Activated naive CD4-positive, alpha-beta T cell treated with anti-CD3 and anti-CD28 coated beads for 36 hours (primary cell): ENCODE measurements at regions of chr22 and their contacts with region 1.

Region 1: GRCh38 chr22:37077884-37078485 is 26.4 kb downstream of the KCTD17 start:
- DNase-seq: peak; percentile 91
- H3K4me3 Mint-ChIP-seq: peak overlapping the region; percentile 12
- H3K27ac Mint-ChIP-seq: peak overlapping the region; percentile 97
- H3K4me1 Mint-ChIP-seq: peaks cover 53% of the 10 kb centered on the region
- H3K27me3 Mint-ChIP-seq: peaks cover 4% of the 10 kb centered on the region

Region 2: DNA sequence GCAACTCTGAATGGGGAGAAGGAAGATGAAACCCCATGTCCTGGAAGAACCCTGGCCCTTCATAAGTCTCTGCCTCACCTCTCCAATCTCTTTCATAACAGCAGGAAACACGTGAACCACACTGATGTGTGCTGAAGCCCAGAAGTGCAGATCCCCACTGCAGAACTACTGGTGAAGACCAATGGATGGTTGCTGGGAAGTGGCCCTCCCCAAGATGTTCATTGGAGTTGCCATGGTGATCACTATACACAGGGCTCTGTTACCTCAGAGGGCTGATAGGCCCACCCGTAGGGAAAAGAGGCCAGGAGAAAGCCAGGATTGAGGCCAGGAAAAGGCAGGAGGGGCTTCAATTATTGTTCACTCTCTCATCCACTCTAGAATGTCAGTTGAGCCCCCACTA is 70.3 kb before region 1 on chr22:
- CTCF ChIA-PET with region 1: no interaction called
- intact Hi-C with region 1: no loop called
- DNase-seq: no peak
- H3K4me3 Mint-ChIP-seq: no peak overlapping the region
- H3K27ac Mint-ChIP-seq: peak overlapping the region; percentile 10
- H3K4me1 Mint-ChIP-seq: no peaks in the 10 kb centered on the region
- H3K27me3 Mint-ChIP-seq: peaks cover 3% of the 10 kb centered on the region

Region 3: DNA sequence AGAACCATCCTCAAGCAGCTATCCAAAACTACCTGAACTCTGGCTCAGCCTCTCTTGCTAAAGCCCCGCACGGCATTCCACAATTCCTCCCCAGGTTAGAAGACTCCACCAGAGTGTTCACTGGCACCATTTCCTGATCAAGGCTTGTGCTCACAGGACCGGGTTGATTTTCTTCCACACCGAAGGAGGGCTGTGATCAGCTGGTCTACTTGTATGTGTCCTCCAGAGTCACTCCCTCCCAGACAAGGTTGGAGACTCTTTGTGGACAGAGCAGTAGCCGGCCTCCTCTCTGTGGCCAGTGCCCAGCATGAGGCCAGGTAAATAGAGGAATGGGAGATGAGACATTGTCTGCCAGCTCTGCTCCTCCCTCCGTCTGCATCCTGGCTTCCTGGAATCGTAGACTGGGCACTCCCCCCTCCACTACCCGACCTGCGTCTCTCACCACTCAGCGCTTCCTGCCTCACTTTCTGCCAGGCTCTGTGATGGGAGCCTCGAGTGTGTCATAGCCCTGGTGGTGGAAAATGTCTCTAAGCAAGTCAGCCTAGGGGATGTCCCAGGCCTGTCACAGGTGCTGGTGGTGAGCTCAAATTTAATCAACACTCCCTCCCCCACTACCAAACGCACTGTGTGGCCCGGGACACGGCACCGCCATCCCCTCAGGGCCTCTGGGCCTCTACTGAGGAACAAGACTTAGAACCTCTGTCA is 44.1 kb after region 1 on chr22:
- CTCF ChIA-PET with region 1: interaction called, 6 read pairs
- intact Hi-C with region 1: loop called (anchors 1 kb)
- DNase-seq: peak; percentile 98
- H3K4me3 Mint-ChIP-seq: peak overlapping the region; percentile 85
- H3K27ac Mint-ChIP-seq: peak overlapping the region; percentile 99
- H3K4me1 Mint-ChIP-seq: peaks cover 73% of the 10 kb centered on the region
- H3K27me3 Mint-ChIP-seq: no peaks in the 10 kb centered on the region

Region 4: GRCh38 chr22:37148742-37149665 is 71.0 kb after region 1 on chr22:
- CTCF ChIA-PET with region 1: interaction called, 18 read pairs
- intact Hi-C with region 1: loop called (anchors 1 kb)
- DNase-seq: no peak
- H3K4me3 Mint-ChIP-seq: peak overlapping the region; percentile 87
- H3K27ac Mint-ChIP-seq: peak overlapping the region; percentile 96
- H3K4me1 Mint-ChIP-seq: peaks cover 53% of the 10 kb centered on the region
- H3K27me3 Mint-ChIP-seq: no peaks in the 10 kb centered on the region

Region 5: GRCh38 chr22:37193629-37194191 is 115.7 kb after region 1 on chr22:
- CTCF ChIA-PET with region 1: interaction called, 38 read pairs
- intact Hi-C with region 1: loop called (anchors 1 kb)
- DNase-seq: peak; percentile 61
- H3K4me3 Mint-ChIP-seq: peak overlapping the region; percentile 14
- H3K27ac Mint-ChIP-seq: peak overlapping the region; percentile 65
- H3K4me1 Mint-ChIP-seq: peaks cover 45% of the 10 kb centered on the region
- H3K27me3 Mint-ChIP-seq: no peaks in the 10 kb centered on the region

Region 6: GRCh38 chr22:37244114-37244921 is 166.3 kb after region 1 on chr22 and contains the start of gene RAC2:
- CTCF ChIA-PET with region 1: no interaction called
- intact Hi-C with region 1: loop called (anchors 5 kb)
- DNase-seq: peak; percentile 94
- H3K4me3 Mint-ChIP-seq: peak within 1 kb of the TSS; percentile 99
- H3K27ac Mint-ChIP-seq: peak within 1 kb of the TSS; percentile 99
- H3K4me1 Mint-ChIP-seq: peaks cover 38% of the 10 kb centered on the region
- H3K27me3 Mint-ChIP-seq: no peaks in the 10 kb centered on the region
- total RNA-seq, gene RAC2: 728 to 759 TPM

Region 7: DNA sequence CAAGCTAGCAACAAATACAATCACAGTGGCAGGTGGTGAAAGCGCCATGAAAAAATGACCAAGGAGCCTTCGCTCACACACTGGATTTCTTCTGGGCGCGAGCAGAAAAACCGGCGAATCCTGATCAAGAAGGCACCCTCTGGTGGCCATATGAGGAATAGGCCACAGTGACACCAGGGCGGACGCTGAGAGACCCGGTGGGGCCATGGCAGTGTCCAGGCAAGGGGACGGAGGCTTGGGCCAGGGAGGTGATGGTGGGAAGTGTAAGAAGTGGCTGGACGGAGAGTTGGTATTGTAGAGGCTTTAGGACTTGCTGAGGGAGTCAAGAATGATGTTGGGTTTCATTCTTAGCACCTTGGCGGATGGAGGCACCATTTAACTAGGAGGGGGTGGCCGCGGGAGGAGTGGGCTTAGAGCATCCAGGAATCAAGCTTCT is 182.9 kb after region 1 on chr22:
- CTCF ChIA-PET with region 1: interaction called, 8 read pairs
- intact Hi-C with region 1: loop called (anchors 2 kb)
- DNase-seq: peak; percentile 75
- H3K4me3 Mint-ChIP-seq: no peak overlapping the region
- H3K27ac Mint-ChIP-seq: no peak overlapping the region
- H3K4me1 Mint-ChIP-seq: peaks cover 34% of the 10 kb centered on the region
- H3K27me3 Mint-ChIP-seq: no peaks in the 10 kb centered on the region

Region 8: DNA sequence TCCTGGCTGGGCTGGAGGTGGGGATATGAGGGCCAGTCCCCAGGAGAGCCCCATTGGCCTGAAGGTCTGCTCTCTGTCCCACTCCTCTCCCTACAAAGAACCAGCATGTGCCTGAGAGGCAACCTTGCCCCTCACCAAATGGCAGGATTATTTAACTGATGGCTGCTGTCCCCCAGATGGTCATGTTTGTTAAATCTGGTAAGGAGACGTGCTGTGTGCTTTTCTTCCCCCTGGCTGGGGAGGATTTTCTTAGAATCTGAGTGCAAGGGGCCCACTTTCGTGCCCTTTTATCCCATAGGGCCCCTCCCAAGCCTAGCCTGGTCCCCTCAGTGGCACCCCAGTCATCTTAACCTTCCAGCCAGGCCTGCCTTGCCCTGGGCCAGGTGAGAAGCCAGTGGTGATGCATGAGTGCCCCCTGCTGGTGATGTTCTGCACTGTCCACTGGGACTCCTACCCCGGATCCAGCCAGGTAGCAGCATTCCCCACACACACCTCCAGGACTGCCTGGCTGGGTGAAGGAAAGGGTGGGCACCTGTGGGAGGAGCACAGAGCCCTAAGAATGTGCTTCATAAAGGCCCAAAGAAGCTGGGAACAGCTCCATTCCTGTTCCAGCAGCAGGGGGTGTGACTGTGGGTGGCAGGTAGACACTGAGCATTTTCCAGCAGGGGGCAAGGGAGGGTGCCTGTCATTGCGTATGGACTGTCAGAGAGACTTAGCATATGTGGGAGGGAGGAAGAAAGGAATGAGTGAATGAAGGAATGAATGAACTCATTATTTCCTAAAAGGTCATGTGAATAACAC is 379.3 kb after region 1 on chr22:
- CTCF ChIA-PET with region 1: no interaction called
- intact Hi-C with region 1: loop called (anchors 10 kb)
- DNase-seq: peak; percentile 93
- H3K4me3 Mint-ChIP-seq: no peak overlapping the region
- H3K27ac Mint-ChIP-seq: no peak overlapping the region
- H3K4me1 Mint-ChIP-seq: no peaks in the 10 kb centered on the region
- H3K27me3 Mint-ChIP-seq: no peaks in the 10 kb centered on the region